A549 (cell line): ENCODE measurements at regions of chr2 and their contacts with region 1.

Region 1: GRCh38 chr2:64311948-64312621 is 141.9 kb upstream of the LGALSL start:
- DNase-seq: peak; percentile 18 to 53
- ATAC-seq: peak; percentile 55 to 87; a peak in 5 of 6 replicates
- H3K4me3 ChIP-seq: no peak overlapping the region
- H3K27ac ChIP-seq: no peak overlapping the region
- H3K4me1 ChIP-seq: no peaks in the 10 kb centered on the region
- CTCF ChIP-seq: 0 out of 3 replicates have a peak, but pooled peaks have one; percentile 17
- EP300 ChIP-seq: no peak
- POLR2A ChIP-seq: no peak
- RAD21 ChIP-seq: peak; percentile 30 to 34; a peak in 3 of 5 replicates

Region 2: DNA sequence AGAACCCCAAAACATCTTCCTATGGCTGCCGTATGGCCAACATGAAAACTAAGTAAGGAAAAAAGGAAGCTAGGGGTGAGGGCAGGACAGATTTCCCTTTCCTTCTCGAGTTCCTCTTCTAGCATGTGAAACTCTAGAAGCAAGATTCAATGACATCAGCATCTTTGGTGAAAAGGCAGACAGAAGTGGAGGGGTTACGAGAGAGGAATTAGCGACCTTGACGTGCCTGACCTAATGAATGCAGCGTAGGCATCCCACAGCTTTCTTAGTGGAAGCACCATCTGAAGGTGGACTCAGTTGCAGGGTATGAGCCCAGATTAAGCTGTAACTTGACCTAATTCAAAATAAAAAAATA is 120.0 kb before region 1 on chr2:
- CTCF ChIA-PET with region 1: no interaction called
- POLR2A ChIA-PET with region 1: no interaction called
- DNase-seq: no peak
- ATAC-seq: no peak
- H3K4me3 ChIP-seq: no peak overlapping the region
- H3K27ac ChIP-seq: no peak overlapping the region
- H3K4me1 ChIP-seq: no peaks in the 10 kb centered on the region
- CTCF ChIP-seq: no peak
- EP300 ChIP-seq: no peak
- POLR2A ChIP-seq: no peak
- RAD21 ChIP-seq: no peak

Region 3: GRCh38 chr2:64298161-64298560 is 13.9 kb before region 1 on chr2:
- CTCF ChIA-PET with region 1: interaction called, 19 read pairs
- POLR2A ChIA-PET with region 1: no interaction called
- DNase-seq: no peak
- ATAC-seq: no peak
- H3K4me3 ChIP-seq: no peak overlapping the region
- H3K27ac ChIP-seq: no peak overlapping the region
- H3K4me1 ChIP-seq: no peaks in the 10 kb centered on the region
- CTCF ChIP-seq: no peak
- EP300 ChIP-seq: no peak
- POLR2A ChIP-seq: no peak
- RAD21 ChIP-seq: no peak